Activated CD8-positive, alpha-beta memory T cell treated with anti-CD3 and anti-CD28 coated beads, Interleukin-2, amount 10 ng/mL, durations not matched to agents 7 days and 5 days (primary cell): ENCODE measurements at regions of chr12 and their contacts with region 1.

Region 1: GRCh38 chr12:85866986-85867776 is 6.9 kb upstream of the NTS start:
- DNase-seq: no peak
- ATAC-seq: no peak
- H3K4me3 Mint-ChIP-seq: no peak overlapping the region
- H3K27ac Mint-ChIP-seq: no peak overlapping the region
- H3K4me1 Mint-ChIP-seq: no peaks in the 10 kb centered on the region
- H3K27me3 Mint-ChIP-seq: no peaks in the 10 kb centered on the region

Region 2: DNA sequence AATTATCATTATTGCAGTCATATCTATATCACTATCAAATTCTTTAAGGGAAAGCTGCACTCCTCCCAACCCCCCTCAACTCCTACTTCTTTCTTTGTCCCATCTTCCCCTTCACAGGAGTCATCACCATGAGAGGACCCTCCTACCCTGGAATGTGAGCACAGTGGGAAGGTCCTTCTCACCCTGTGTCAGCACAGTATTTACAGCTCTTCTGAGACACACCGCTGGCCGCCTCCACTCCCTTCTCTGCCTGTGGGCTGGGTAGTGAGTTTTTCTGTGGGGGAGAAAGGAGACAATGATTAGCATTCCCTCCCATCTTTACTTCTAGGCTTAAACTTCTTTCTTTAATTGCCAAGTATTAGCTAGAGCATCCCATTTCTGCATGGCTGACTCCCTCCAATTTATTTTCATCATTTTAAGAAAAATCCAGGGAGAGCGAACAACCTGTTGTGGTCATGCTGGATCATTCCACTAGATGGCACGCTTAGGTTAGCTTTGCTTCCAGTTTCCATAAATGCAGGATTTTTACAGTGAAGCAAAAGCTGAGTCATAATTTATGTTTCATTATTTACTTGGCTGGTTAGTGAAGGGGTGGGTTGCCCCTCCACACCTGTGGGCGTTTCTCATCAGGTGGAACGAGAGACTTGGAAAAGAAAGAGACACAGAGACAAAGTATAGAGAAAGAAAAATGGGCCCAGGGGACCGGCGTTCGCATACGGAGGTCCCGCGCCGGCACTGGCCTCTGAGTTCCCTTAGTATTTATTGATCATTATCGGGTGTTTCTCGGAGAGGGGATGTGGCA is 398.6 kb before region 1 on chr12:
- CTCF ChIA-PET with region 1: interaction called, 10 read pairs
- DNase-seq: no peak
- ATAC-seq: peak; percentile 47
- H3K4me3 Mint-ChIP-seq: peak overlapping the region; percentile 28
- H3K27ac Mint-ChIP-seq: no peak overlapping the region
- H3K4me1 Mint-ChIP-seq: peaks cover 7% of the 10 kb centered on the region
- H3K27me3 Mint-ChIP-seq: no peaks in the 10 kb centered on the region